ENCODE measurements at regions of chr7 and their contacts with region 1.

Region 1: DNA sequence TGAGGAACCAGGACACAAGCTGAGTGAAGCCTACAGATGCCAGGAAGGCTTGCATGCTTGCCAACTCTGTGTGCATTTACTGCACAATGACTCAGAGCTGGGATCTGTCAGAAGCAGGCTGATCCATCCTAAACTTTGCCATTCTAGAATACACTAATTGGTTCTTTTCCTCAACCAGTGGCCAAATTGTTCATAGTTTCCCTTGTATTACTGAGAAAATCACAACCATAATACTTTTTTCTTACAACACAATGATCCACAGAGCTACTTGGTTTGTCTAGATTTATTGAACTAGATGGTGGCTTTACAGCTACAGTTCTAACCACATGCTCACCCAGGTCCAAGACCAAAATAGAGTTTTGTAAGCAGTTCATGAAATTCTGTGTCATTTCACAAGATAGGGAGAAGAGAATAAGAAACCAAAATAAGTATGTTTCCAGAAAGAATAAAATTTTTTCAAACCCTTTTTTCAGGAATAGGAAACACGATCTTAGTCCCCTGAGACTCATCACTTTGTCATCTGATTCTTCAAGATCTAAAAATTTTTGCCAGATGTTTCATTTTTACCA is 21.0 kb upstream of the LRRC17 start:
- DNase-seq: peak in 1 of 2 donors; percentile 35
- ATAC-seq: peak in 6 of 8 donors; percentile 42 to 82 (median 64)
- H3K4me3 ChIP-seq: no peak overlapping the region
- H3K27ac ChIP-seq: peak overlapping the region in 6 of 10 donors; percentile 5 to 68 (median 20)
- H3K4me1 ChIP-seq: peaks cover 2 to 54% (median 35%) of the 10 kb centered on the region in 9 donors
- H3K27me3 ChIP-seq: no peaks in the 10 kb centered on the region
- CTCF ChIP-seq: no peak

Region 2: GRCh38 chr7:102942181-102942866 is 50.5 kb after region 1 on chr7:
- intact Hi-C with region 1: loop called in 1 of 10 experiments (anchors 5 kb)
- DNase-seq: no peak
- ATAC-seq: peak in 2 of 8 donors; percentile 4 to 53
- H3K4me3 ChIP-seq: no peak overlapping the region
- H3K27ac ChIP-seq: peak overlapping the region in 3 of 10 donors; percentile 2 to 32 (median 21)
- H3K4me1 ChIP-seq: peaks cover 3 to 46% (median 23%) of the 10 kb centered on the region in 9 donors
- H3K27me3 ChIP-seq: no peaks in the 10 kb centered on the region
- CTCF ChIP-seq: no peak

Region 3: DNA sequence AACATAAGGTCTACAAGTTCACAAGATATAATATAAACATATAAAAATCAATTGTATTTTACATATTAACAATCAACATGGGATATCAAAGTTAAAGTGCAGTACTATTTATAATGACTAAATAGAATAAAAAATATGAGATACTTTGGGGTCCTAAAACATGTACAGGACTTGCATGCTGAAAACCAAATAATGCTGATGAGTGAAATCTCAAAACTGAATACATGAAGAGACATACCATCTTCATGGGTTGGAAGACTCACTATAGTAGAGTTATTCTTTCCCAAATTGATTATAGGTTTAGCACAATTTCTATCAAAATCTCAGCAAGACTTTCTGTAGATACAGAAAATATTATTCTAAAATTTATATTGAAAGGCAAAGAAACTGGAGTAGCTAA is 1618.1 kb after region 1 on chr7:
- intact Hi-C with region 1: no loop called
- DNase-seq: no peak
- ATAC-seq: no peak
- H3K4me3 ChIP-seq: no peak overlapping the region
- H3K27ac ChIP-seq: no peak overlapping the region
- H3K4me1 ChIP-seq: no peaks in the 10 kb centered on the region
- H3K27me3 ChIP-seq: no peaks in the 10 kb centered on the region
- CTCF ChIP-seq: no peak